ENCODE measurements at regions of chr14 and their contacts with region 1.

Region 1: DNA sequence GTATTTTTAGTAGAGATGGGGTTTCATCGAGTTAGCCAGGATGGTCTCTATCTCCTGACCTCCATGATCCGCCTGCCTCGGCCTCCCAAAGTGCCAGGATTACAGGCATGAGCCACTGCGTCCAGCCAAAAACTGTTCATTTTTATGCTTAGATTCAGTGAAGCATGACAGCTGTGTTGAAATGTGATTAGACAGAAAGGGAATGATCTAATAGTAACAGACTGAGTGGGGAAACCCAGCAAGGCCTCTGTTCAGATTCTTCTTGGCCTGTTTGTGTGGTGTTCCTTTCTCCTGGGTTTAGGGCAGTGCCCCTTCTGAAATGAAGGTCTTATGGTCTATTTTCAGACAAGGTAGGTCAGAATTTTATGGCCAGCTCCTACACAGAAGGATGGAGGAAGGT is 11.8 kb upstream of the ABCD4 start:
- DNase-seq: no peak
- H3K4me3 ChIP-seq: no peak overlapping the region
- H3K27ac ChIP-seq: no peak overlapping the region
- H3K4me1 ChIP-seq: no peaks in the 10 kb centered on the region
- H3K27me3 ChIP-seq: no peaks in the 10 kb centered on the region
- CTCF ChIP-seq: no peak
- EP300 ChIP-seq: no peak
- POLR2A ChIP-seq: no peak
- RAD21 ChIP-seq: no peak

Region 2: GRCh38 chr14:74302634-74303577 is 11.7 kb before region 1 on chr14 and contains the start of gene ABCD4:
- CTCF ChIA-PET with region 1: interaction called, 144 read pairs
- POLR2A ChIA-PET with region 1: interaction called, 29 read pairs
- DNase-seq: peak; percentile 90 to 99
- H3K4me3 ChIP-seq: peak within 1 kb of the TSS; percentile 76 to 99 (median 80)
- H3K27ac ChIP-seq: peak within 1 kb of the TSS; percentile 46; the same call in 1 of the 2 replicates
- H3K4me1 ChIP-seq: no peaks in the 10 kb centered on the region
- H3K27me3 ChIP-seq: no peaks in the 10 kb centered on the region
- CTCF ChIP-seq: peak; percentile 57 to 70 (median 63)
- EP300 ChIP-seq: 0 out of 3 replicates have a peak, but pooled peaks of 1 of the 2 experiments have one; percentile 60
- POLR2A ChIP-seq: peak; percentile 98 to 100
- RAD21 ChIP-seq: 0 out of 4 replicates have a peak, but pooled peaks of 1 of the 2 experiments have one; percentile 8
- total RNA-seq, gene ABCD4: 84.8 and 97.7 TPM in 2 replicates

Measured in H1 (cell line).